Aorta (tissue), 5 donors: ENCODE measurements at regions of chr9 and their contacts with region 1.

Region 1: GRCh38 chr9:114108016-114108833 is 9.1 kb upstream of the KIF12 start:
- DNase-seq: peak; percentile 80 to 93
- ATAC-seq: peak; percentile 82
- H3K4me3 ChIP-seq: no peak overlapping the region
- H3K27ac ChIP-seq: no peak overlapping the region
- H3K4me1 ChIP-seq: no peaks in the 10 kb centered on the region
- H3K27me3 ChIP-seq: no peaks in the 10 kb centered on the region

Region 2: GRCh38 chr9:114271641-114272081 is 163.4 kb after region 1 on chr9:
- intact Hi-C with region 1: loop called in 1 of 2 experiments (anchors 5 kb)
- DNase-seq: peak; percentile 62 to 84
- ATAC-seq: peak; percentile 65
- H3K4me3 ChIP-seq: no peak overlapping the region
- H3K27ac ChIP-seq: no peak overlapping the region
- H3K4me1 ChIP-seq: no peaks in the 10 kb centered on the region
- H3K27me3 ChIP-seq: no peaks in the 10 kb centered on the region

Region 3: GRCh38 chr9:114291064-114291474 is 182.8 kb after region 1 on chr9:
- intact Hi-C with region 1: loop called (anchors 1 to 5 kb)
- DNase-seq: peak; percentile 74 to 92
- ATAC-seq: peak; percentile 69
- H3K4me3 ChIP-seq: no peak overlapping the region
- H3K27ac ChIP-seq: no peak overlapping the region
- H3K4me1 ChIP-seq: no peaks in the 10 kb centered on the region
- H3K27me3 ChIP-seq: no peaks in the 10 kb centered on the region

Region 4: DNA sequence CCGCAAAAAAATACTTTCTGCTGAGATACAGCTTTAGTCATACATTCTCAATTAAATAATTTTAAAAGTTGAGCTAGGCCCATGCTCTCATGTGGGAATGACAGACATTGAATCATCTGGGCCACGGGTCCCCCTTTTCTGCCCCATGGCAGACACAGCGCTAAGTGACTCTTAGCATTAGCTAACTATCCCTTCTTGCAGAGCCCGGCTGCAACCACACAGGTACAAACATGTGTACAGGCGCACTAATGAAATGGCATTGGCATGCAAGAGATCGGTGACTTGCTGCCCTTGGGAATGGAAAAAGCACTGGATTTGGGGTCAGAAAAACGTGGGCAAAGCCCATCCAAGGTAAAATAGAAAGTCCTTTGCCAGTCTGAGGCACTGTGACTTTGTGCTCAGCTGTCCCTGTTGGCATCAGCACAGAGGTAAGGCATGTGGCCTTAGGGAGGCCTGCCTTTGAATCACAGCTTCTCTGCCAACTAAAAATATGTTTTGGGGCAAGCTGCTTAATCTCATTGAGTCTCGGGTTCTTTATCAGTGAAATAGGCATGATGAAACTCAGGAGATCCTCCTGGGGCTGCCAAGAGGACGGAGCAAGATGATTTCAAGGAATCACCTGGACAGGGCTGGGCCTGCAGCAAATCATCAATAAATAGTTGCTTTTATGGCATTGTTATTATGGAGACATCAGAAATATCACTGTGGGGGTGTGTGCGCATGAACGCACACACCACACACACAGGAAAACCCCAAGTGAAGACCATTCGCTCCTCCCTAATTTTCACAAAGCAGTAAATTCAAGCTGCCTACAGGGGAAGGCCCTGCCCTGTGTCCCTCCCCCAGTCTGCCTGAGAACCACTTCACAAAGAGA is 342.8 kb after region 1 on chr9:
- intact Hi-C with region 1: no loop called
- DNase-seq: no peak
- ATAC-seq: no peak
- H3K4me3 ChIP-seq: no peak overlapping the region
- H3K27ac ChIP-seq: no peak overlapping the region
- H3K4me1 ChIP-seq: no peaks in the 10 kb centered on the region
- H3K27me3 ChIP-seq: peaks cover 0 to 2% of the 10 kb centered on the region in 2 donors